ENCODE measurements at regions of chr1 and their contacts with region 1.

Region 1: GRCh38 chr1:88655685-88656299 is 28.3 kb upstream of the PKN2 start:
- DNase-seq: peak; percentile 37
- ATAC-seq: no peak; the same call in 1 of the 2 replicates
- H3K4me3 ChIP-seq: no peak overlapping the region
- H3K27ac ChIP-seq: no peak overlapping the region
- H3K4me1 ChIP-seq: no peaks in the 10 kb centered on the region
- H3K27me3 ChIP-seq: no peaks in the 10 kb centered on the region
- CTCF ChIP-seq: peak; percentile 62
- POLR2A ChIP-seq: no peak
- RAD21 ChIP-seq: peak; percentile 40

Region 2: GRCh38 chr1:88891318-88891950 is 235.6 kb after region 1 on chr1 and contains the start of gene GTF2B:
- CTCF ChIA-PET with region 1: no interaction called
- POLR2A ChIA-PET with region 1: no interaction called
- dilution Hi-C with region 1: no loop called
- in situ Hi-C with region 1: no loop called
- intact Hi-C with region 1: loop called (anchors 5 kb)
- DNase-seq: peak; percentile 97
- ATAC-seq: peak; percentile 92
- H3K4me3 ChIP-seq: peak within 1 kb of the TSS; percentile 76
- H3K27ac ChIP-seq: peak within 1 kb of the TSS; percentile 65
- H3K4me1 ChIP-seq: no peaks in the 10 kb centered on the region
- H3K27me3 ChIP-seq: no peaks in the 10 kb centered on the region
- CTCF ChIP-seq: no peak
- POLR2A ChIP-seq: peak; percentile 100
- RAD21 ChIP-seq: no peak
- total RNA-seq, gene GTF2B: 41.0 and 55.5 TPM in 2 replicates

Measured in IMR-90 (cell line).